Activated B cell treated with CpG ODN at 0.5 μM for 24 hours (primary cell): ENCODE measurements at regions of chr9 and their contacts with region 1.

Region 1: GRCh38 chr9:70419546-70420266 is 5.2 kb upstream of the KLF9 start:
- DNase-seq: no peak
- ATAC-seq: peak; percentile 36
- H3K4me3 Mint-ChIP-seq: peak overlapping the region; percentile 95
- H3K27ac Mint-ChIP-seq: peak overlapping the region; percentile 98
- H3K4me1 Mint-ChIP-seq: peaks cover 39% of the 10 kb centered on the region
- H3K27me3 Mint-ChIP-seq: no peaks in the 10 kb centered on the region
- CTCF ChIP-seq: no peak

Region 2: DNA sequence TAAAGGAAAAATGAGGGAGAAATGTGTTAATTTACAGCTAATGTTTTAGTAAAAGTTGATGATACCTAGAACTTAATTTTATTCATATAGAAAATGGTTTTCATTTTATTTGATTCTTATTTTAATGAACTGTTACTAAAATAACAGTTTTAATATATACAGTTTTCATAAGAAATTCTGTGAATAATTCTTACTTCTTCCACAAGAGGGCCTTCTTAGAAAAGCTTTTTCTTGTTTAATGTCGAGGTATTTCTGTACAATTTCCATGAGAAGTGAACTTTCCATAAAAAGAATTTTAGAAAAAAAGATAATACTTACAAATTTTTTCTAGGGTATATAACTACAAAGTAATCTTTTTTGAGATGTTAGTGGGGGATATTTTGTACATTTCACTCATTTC is 79.1 kb before region 1 on chr9:
- CTCF ChIA-PET with region 1: interaction called, 3 read pairs
- POLR2A ChIA-PET with region 1: interaction called, 4 read pairs
- intact Hi-C with region 1: loop called (anchors 1 kb)
- DNase-seq: no peak
- ATAC-seq: no peak
- H3K4me3 Mint-ChIP-seq: no peak overlapping the region
- H3K27ac Mint-ChIP-seq: no peak overlapping the region
- H3K4me1 Mint-ChIP-seq: no peaks in the 10 kb centered on the region
- H3K27me3 Mint-ChIP-seq: no peaks in the 10 kb centered on the region
- CTCF ChIP-seq: no peak

Region 3: DNA sequence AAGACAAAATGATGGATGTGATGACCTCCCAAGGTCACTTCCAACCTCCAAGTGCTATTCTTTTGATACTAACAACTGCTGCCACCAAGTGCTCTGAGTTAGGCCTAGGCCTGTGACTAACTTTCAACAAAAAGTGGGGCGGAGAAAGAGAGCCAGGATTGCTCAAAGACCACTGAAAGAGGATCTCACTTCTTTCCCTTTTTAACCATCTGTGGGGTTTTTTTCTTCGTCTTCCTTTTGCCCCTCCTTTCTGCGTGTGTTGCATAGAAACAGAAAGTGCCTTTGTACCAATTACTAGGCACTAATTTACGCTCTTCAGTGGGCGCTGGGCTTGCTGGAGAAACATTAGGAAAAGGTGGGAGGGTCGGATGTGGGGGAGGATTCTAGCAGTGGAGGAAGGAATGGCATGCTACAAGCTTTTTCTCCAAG is 13.3 kb before region 1 on chr9:
- CTCF ChIA-PET with region 1: interaction called, 3 read pairs
- POLR2A ChIA-PET with region 1: interaction called, 48 read pairs
- intact Hi-C with region 1: loop called (anchors 1 kb)
- DNase-seq: no peak
- ATAC-seq: peak; percentile 87
- H3K4me3 Mint-ChIP-seq: peak overlapping the region; percentile 80
- H3K27ac Mint-ChIP-seq: peak overlapping the region; percentile 97
- H3K4me1 Mint-ChIP-seq: peaks cover 64% of the 10 kb centered on the region
- H3K27me3 Mint-ChIP-seq: no peaks in the 10 kb centered on the region
- CTCF ChIP-seq: no peak

Region 4: GRCh38 chr9:70563431-70564204 is 143.9 kb after region 1 on chr9:
- CTCF ChIA-PET with region 1: no interaction called
- POLR2A ChIA-PET with region 1: interaction called, 23 read pairs
- intact Hi-C with region 1: loop called (anchors 1 kb)
- DNase-seq: peak; percentile 20
- ATAC-seq: peak; percentile 93
- H3K4me3 Mint-ChIP-seq: peak overlapping the region; percentile 72
- H3K27ac Mint-ChIP-seq: peak overlapping the region; percentile 95
- H3K4me1 Mint-ChIP-seq: peaks cover 27% of the 10 kb centered on the region
- H3K27me3 Mint-ChIP-seq: no peaks in the 10 kb centered on the region
- CTCF ChIP-seq: no peak

Region 5: DNA sequence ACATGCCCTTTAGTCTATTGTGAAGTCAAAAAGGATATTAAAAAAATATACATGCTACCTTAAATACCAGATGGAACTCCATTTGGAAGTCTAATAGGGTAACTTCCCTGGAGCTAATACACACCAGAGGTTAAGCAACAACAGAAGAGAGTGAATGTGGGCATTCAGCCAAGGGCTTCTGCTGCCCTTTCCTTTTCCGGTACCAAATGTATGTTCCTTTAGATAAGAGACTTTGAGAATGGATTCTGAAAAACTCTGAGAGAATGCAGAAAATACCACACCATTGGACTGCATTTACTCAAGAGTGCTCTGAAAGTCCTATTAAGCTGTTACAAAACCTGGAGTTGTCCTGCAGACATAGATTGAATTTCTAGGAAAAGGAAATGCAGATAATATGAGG is 725.5 kb after region 1 on chr9:
- CTCF ChIA-PET with region 1: no interaction called
- POLR2A ChIA-PET with region 1: no interaction called
- intact Hi-C with region 1: no loop called
- DNase-seq: no peak
- ATAC-seq: no peak
- H3K4me3 Mint-ChIP-seq: no peak overlapping the region
- H3K27ac Mint-ChIP-seq: no peak overlapping the region
- H3K4me1 Mint-ChIP-seq: no peaks in the 10 kb centered on the region
- H3K27me3 Mint-ChIP-seq: no peaks in the 10 kb centered on the region
- CTCF ChIP-seq: no peak